CD8-positive, alpha-beta T cell (primary cell): ENCODE measurements at regions of chr19 and their contacts with region 1.

Region 1: DNA sequence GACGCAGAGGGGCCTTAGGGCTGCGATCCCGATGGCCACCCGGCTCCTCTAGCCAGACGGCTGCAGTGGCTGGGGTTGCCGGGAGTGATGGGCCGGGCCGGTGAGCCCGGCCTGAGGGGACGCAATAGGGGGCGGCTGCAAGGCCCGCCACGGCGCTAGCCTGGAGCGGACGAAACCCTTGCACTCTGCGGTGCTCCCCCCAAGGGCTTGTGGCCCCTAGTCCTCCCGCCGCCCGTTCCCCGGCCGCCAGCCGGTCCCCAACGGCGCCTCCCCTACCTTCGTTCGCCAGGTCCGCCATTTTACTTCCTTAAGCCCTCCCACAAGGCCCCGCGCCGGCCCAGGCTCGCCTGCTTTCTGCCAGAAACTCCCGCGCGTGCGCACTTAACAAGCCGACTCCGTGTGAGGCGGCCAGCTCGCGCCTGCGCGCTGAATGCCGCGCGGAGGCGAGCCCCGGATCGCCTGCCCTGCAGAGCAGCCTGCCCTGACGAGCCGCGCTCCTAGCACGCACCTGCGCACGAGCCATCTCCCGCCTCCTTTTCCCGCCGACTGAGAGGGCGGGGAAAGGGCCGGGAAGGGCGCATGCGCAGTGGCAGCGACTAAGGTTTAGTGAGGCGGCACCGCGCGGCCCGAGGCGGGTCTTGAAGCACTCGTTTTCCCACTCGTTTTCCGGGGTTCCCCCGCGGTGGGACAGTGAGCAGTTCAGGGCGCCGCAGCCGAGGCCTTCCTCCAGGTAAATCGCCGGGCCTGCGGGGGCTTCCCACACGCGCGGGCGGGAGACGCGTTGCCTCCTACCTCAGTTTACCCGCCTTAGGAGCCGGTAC is at the start of gene RANBP3:
- DNase-seq: peak; percentile 94 to 100 (median 99)
- ATAC-seq: peak; percentile 88
- H3K4me3 ChIP-seq: peak within 1 kb of the TSS; percentile 65 to 91
- H3K4me3 Mint-ChIP-seq: peak within 1 kb of the TSS; percentile 96
- H3K27ac ChIP-seq: peak within 1 kb of the TSS; percentile 83 to 85
- H3K27ac Mint-ChIP-seq: peak within 1 kb of the TSS; percentile 95
- H3K4me1 ChIP-seq: peaks cover 50% of the 10 kb centered on the region
- H3K4me1 Mint-ChIP-seq: peaks cover 56% of the 10 kb centered on the region
- H3K27me3 ChIP-seq: no peaks in the 10 kb centered on the region
- H3K27me3 Mint-ChIP-seq: no peaks in the 10 kb centered on the region
- CTCF ChIP-seq: no peak
- total RNA-seq, gene RANBP3: 109 to 118 TPM

Region 2: DNA sequence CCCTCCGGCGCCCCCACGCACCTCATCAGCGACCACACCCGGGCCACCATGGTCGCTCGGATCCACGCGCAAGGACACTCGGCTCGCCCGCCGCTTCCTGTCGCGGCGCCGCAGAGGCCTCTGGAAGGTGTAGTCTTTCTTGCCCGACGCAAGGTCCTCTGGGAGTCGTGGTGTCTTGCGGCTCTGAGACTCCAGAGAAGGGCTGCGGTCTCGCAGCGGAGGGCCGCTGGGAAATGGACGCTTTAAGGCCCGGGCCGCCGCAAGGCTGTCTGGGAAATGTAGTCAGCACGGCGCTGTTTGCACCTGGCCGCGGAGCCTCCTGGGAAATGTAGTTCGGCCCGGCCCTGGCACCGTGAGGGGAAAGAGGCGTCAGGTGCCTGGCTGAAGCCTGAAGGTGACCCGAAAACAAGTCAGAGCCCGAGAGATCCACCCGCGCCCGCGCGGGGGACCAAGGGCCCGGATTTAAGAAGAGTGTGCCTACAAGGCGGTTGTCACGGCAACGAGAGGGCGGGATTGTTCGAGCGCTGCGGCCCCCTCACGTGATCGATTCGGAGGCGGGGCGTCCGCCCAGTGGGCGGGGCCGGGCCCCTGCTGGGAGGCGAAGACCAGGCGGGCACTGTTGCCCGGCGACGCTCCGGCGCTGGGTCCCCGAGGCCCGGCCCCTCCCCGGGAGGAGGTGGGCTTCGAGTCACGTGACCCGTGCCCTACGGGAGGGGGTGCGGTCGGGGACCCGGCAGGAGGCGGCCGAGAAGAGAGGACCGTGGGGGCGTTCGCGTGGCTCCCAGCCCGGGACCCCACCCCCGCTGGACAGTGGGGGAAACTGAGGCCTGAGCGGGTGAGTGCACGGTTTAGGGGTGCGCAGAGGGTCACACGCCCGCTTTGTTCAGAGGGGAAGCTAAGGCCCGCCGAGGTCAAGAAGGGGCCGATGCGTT is 297.3 kb before region 1 on chr19 and contains the starts of genes HSD11B1L and MICOS13:
- CTCF ChIA-PET with region 1: no interaction called
- POLR2A ChIA-PET with region 1: no interaction called
- intact Hi-C with region 1: loop called in 1 of 2 experiments (anchors 2 kb)
- DNase-seq: peak; percentile 95 to 100 (median 98)
- ATAC-seq: peak; percentile 94
- H3K4me3 ChIP-seq: peak within 1 kb of the TSS; percentile 94 to 96
- H3K4me3 Mint-ChIP-seq: peak within 1 kb of the TSS; percentile 90
- H3K27ac ChIP-seq: peak within 1 kb of the TSS; percentile 98 to 100
- H3K27ac Mint-ChIP-seq: peak within 1 kb of the TSS; percentile 96
- H3K4me1 ChIP-seq: peaks cover 15% of the 10 kb centered on the region
- H3K4me1 Mint-ChIP-seq: peaks cover 25% of the 10 kb centered on the region
- H3K27me3 ChIP-seq: no peaks in the 10 kb centered on the region
- H3K27me3 Mint-ChIP-seq: no peaks in the 10 kb centered on the region
- CTCF ChIP-seq: no peak
- total RNA-seq, gene HSD11B1L: 3.1 to 4.1 TPM
- total RNA-seq, gene MICOS13: 19.6 to 24.8 TPM

Region 3: DNA sequence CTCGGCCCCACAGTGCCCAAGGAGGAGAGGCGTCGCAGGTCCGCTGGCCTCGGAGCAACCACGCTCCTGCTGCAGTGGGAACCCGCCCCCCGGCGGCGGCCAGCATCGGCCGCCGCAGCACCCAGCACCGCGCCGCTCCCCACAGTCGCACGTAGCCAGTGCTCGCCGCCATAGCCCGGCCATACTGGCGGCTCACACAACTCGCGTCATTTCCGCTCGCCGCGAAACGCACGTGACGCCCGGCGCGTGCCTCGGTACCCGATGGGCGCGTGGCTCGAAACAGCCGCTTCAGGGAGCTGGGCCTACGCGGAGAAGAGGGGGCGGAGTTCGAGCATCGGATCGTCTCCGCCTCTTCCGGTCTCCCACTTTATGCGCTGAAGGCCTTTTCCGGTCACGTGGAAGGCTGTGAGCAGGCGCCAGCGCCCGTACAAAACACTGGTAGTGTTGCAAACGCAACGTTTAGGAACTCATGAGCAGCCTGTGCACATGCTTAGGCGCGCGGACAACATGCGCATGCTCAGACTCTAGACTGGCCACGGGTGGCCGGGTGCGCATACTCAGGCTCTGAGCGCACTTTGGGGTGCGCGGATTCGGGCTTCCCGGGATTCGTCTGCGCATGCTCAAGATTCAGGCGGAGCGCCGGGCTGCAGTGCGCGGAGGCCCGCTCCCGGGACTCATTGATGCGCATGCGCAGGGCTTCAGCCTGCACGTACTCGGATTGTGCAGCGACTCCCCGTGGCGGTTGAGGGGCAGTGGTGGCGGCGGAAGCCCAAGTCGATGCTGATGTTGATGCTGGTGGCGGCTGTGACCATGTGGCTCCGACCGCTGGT is 257.8 kb before region 1 on chr19 and contains the starts of genes CATSPERD and LONP1:
- CTCF ChIA-PET with region 1: no interaction called
- POLR2A ChIA-PET with region 1: no interaction called
- intact Hi-C with region 1: loop called in 1 of 2 experiments (anchors 5 kb)
- DNase-seq: peak; percentile 92 to 100 (median 97)
- ATAC-seq: peak; percentile 86
- H3K4me3 ChIP-seq: peak within 1 kb of the TSS; percentile 91 to 94
- H3K4me3 Mint-ChIP-seq: peak within 1 kb of the TSS; percentile 92
- H3K27ac ChIP-seq: peak within 1 kb of the TSS; percentile 93 to 96
- H3K27ac Mint-ChIP-seq: peak within 1 kb of the TSS; percentile 96
- H3K4me1 ChIP-seq: peaks cover 23% of the 10 kb centered on the region
- H3K4me1 Mint-ChIP-seq: peaks cover 29% of the 10 kb centered on the region
- H3K27me3 ChIP-seq: no peaks in the 10 kb centered on the region
- H3K27me3 Mint-ChIP-seq: no peaks in the 10 kb centered on the region
- CTCF ChIP-seq: peak; percentile 89
- total RNA-seq, gene CATSPERD: not detected
- total RNA-seq, gene LONP1: 90.6 to 109 TPM

Region 4: DNA sequence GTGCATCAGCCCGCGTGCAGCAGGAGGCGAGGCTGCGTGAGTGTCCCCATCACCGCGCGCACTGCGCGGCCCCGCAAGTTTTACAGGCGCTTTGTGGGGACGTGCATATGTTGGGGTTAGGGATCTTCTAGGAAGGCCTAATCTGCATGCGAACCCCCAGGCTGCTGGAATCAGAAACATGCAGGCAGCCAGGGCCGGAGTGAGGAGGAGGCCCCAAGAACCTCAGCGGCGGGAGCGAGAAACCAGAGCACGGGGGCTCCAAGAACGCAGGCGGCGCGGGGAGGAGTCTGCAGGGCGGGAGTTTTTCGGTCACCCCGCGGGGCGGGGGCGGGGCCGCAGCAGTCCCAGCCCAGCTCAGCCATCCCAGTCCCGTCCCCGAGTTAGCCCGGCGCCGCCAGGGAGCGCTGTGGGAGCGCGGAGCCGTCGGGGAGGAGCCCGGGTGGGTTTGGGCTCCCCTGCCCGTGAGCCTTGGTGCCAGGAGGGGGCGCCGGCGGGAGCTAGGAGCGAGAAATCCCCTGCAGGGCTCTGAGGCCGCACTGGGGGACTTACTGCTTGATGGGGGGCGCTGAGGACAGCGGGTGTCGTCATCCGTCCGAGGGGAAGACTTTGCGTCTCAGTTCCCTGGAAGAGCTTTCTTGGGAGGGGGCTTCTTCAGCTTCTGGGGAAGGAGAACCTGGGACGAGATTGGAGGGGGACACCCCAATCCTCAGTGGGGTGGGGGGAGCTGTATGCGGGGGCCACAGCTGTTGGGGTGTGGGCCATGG is 174.1 kb before region 1 on chr19:
- CTCF ChIA-PET with region 1: interaction called, 8 read pairs
- POLR2A ChIA-PET with region 1: no interaction called
- intact Hi-C with region 1: loop called (anchors 1 to 5 kb)
- DNase-seq: peak; percentile 80 to 96 (median 92)
- ATAC-seq: peak; percentile 97
- H3K4me3 ChIP-seq: peak overlapping the region; percentile 41 to 61
- H3K4me3 Mint-ChIP-seq: peak overlapping the region; percentile 75
- H3K27ac ChIP-seq: no peak overlapping the region
- H3K27ac Mint-ChIP-seq: no peak overlapping the region
- H3K4me1 ChIP-seq: peaks cover 34% of the 10 kb centered on the region
- H3K4me1 Mint-ChIP-seq: peaks cover 23% of the 10 kb centered on the region
- H3K27me3 ChIP-seq: peaks cover 0 to 35% of the 10 kb centered on the region in 2 experiments
- H3K27me3 Mint-ChIP-seq: peaks cover 18% of the 10 kb centered on the region
- CTCF ChIP-seq: peak; percentile 93

Region 5: DNA sequence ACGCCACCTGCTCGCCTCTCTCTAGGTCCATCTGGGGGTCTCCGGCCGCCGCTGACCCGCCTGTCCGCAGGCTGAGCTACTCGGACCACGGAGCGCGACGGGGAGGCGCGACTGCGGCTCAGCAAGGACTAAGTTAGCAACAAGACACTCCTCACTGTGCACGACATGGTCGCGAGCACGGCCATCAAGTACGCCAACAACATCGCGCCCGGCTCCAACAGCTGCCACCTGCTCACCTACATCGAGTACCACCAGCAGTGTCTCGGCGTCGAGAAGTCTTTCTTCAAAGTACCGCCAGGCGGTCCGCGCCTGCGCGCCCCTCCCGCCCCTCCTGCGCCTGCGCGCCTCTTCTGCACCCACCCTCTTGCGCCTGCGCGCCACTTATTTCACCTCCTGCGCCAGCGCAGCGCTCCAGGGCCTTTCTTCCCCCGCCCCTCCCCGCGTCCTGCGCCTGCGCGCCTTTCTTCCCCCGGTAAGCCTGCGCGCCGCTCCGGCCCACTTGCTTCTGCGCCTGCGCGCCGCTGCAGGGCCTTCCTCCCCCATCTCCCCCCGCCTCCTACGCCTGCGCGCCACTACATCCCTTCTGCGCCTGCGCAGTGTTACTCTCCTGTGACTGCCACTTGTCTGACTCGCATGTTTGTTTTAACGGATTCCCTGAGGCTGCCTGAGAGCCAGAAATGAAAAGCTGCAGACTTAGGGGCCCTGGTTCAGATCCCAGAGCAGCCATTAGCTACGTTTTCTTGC is 221.4 kb after region 1 on chr19:
- CTCF ChIA-PET with region 1: no interaction called
- POLR2A ChIA-PET with region 1: no interaction called
- intact Hi-C with region 1: loop called in 1 of 2 experiments (anchors 5 kb)
- DNase-seq: peak; percentile 98 to 100 (median 100)
- ATAC-seq: peak; percentile 90
- H3K4me3 ChIP-seq: peak overlapping the region; percentile 80 to 99
- H3K4me3 Mint-ChIP-seq: peak overlapping the region; percentile 94
- H3K27ac ChIP-seq: peak overlapping the region; percentile 65 to 73
- H3K27ac Mint-ChIP-seq: peak overlapping the region; percentile 87
- H3K4me1 ChIP-seq: peaks cover 11% of the 10 kb centered on the region
- H3K4me1 Mint-ChIP-seq: peaks cover 10% of the 10 kb centered on the region
- H3K27me3 ChIP-seq: no peaks in the 10 kb centered on the region
- H3K27me3 Mint-ChIP-seq: peaks cover 3% of the 10 kb centered on the region
- CTCF ChIP-seq: peak; percentile 51